Gastrocnemius medialis (tissue), 4 donors: ENCODE measurements at regions of chr2 and their contacts with region 1.

Region 1: GRCh38 chr2:169824373-169825333 is at the start of gene METTL5:
- DNase-seq: peak; percentile 75 to 82
- ATAC-seq: peak; percentile 71
- H3K4me3 ChIP-seq: peak within 1 kb of the TSS; percentile 72 to 90 (median 74)
- H3K27ac ChIP-seq: peak within 1 kb of the TSS; percentile 85 to 97 (median 94)
- H3K4me1 ChIP-seq: peaks cover 42 to 49% of the 10 kb centered on the region in 2 donors
- H3K27me3 ChIP-seq: no peaks in the 10 kb centered on the region
- CTCF ChIP-seq: peak; percentile 85 to 99 (median 97)
- POLR2A ChIP-seq: peak; percentile 76 to 77
- total RNA-seq, gene METTL5: 24.8 to 63.7 (median 40.9) TPM

Region 2: GRCh38 chr2:169513926-169514325 is 310.7 kb before region 1 on chr2:
- in situ Hi-C with region 1: no loop called
- intact Hi-C with region 1: loop called (anchors 10 kb)
- DNase-seq: peak; percentile 78 to 90
- ATAC-seq: peak; percentile 65 to 70
- H3K4me3 ChIP-seq: peak overlapping the region; percentile 71 to 74 (median 72)
- H3K27ac ChIP-seq: peak overlapping the region; percentile 90 to 95 (median 92)
- H3K4me1 ChIP-seq: peaks cover 29 to 31% of the 10 kb centered on the region in 2 donors
- H3K27me3 ChIP-seq: no peaks in the 10 kb centered on the region
- CTCF ChIP-seq: no peak
- POLR2A ChIP-seq: peak in 1 of 2 donors; percentile 63

Region 3: DNA sequence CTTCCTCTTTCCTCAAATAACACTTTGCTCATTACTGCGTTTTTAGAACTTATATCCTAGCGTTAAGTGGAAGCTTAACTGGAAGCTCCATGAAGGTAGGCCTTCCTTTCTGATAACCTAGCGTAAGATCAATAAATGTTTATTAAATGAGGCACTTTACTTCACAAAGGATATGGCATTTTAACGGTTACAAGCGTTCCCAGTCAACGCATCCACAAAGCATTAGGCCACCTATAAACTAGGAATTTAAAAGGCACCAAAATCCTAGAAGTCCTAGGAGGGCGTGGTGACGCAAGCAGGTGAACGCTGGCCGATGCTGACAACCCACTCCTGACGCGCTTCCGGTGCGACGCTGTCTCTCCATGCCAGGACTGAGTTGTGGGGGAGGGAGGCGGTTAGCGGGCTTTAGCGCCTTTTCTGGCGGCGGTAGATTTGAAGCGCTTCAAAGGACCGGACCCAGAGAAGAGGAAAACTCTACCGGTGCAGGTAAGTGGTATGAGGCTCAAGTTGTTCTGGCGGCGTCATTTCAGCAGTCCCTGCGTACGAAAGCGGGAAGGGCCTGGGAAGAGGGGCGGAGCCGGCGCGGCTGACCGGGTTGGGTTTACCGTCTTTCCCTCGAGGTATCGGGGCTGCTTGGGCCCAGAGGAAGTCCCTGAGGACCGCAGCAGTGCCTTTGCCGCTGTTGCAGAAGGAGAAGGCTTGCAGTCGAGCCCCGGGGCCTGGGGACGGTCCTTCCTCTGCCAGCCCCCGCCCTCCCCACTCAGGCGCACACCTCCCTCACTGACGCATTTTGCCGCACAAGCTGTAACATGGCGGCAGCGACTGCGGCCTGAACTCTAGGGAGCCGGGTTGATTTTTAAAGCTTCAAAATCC is 240.4 kb before region 1 on chr2 and contains the start of gene PPIG:
- in situ Hi-C with region 1: no loop called
- intact Hi-C with region 1: loop called (anchors 10 kb)
- DNase-seq: peak; percentile 82 to 85
- ATAC-seq: peak; percentile 96 to 97
- H3K4me3 ChIP-seq: peak within 1 kb of the TSS; percentile 87 to 99 (median 96)
- H3K27ac ChIP-seq: peak within 1 kb of the TSS; percentile 96 to 98 (median 97)
- H3K4me1 ChIP-seq: peaks cover 18 to 26% of the 10 kb centered on the region in 2 donors
- H3K27me3 ChIP-seq: no peaks in the 10 kb centered on the region
- CTCF ChIP-seq: no peak
- POLR2A ChIP-seq: peak; percentile 62 to 68
- total RNA-seq, gene PPIG: 27.7 to 40.5 (median 29.3) TPM

Region 4: GRCh38 chr2:169798718-169799592 is 25.7 kb before region 1 on chr2 and contains the start of gene SSB:
- in situ Hi-C with region 1: no loop called
- intact Hi-C with region 1: loop called (anchors 2 kb)
- DNase-seq: peak; percentile 85 to 86
- ATAC-seq: peak; percentile 94
- H3K4me3 ChIP-seq: peak within 1 kb of the TSS; percentile 72 to 97 (median 80)
- H3K27ac ChIP-seq: peak within 1 kb of the TSS; percentile 71 to 94 (median 82)
- H3K4me1 ChIP-seq: peaks cover 7 to 19% of the 10 kb centered on the region in 2 donors
- H3K27me3 ChIP-seq: no peaks in the 10 kb centered on the region
- CTCF ChIP-seq: no peak
- POLR2A ChIP-seq: peak; percentile 58 to 69
- total RNA-seq, gene SSB: 35.5 to 36.7 (median 36.1) TPM

Region 5: DNA sequence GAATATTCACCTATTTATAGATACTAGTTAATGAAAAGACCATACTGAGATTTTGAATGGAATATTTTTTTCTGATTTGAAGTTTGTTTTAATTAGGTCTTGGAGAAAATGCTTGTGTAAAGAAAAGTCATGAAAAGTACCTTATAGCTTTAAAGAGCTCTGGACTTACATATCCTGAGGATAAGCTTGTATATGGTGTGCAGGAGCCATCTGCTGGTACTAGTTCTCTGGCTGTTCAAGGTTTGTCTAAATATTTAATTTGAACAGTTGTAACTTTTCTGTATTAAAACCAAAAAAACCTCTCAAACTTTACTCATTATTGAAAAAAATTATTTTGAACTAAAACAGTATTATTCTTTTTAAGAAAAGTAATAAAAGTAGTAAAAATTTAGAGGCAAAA is 52.7 kb after region 1 on chr2:
- in situ Hi-C with region 1: no loop called
- intact Hi-C with region 1: loop called (anchors 5 kb)
- DNase-seq: no peak
- ATAC-seq: no peak
- H3K4me3 ChIP-seq: no peak overlapping the region
- H3K27ac ChIP-seq: no peak overlapping the region
- H3K4me1 ChIP-seq: no peaks in the 10 kb centered on the region
- H3K27me3 ChIP-seq: no peaks in the 10 kb centered on the region
- CTCF ChIP-seq: peak in 3 of 5 experiments; percentile 12 to 44 (median 33)
- POLR2A ChIP-seq: no peak

Region 6: GRCh38 chr2:169895294-169895985 is 70.8 kb after region 1 on chr2:
- in situ Hi-C with region 1: no loop called
- intact Hi-C with region 1: loop called (anchors 2 kb)
- DNase-seq: no peak
- ATAC-seq: peak in 1 of 2 donors; percentile 42
- H3K4me3 ChIP-seq: no peak overlapping the region
- H3K27ac ChIP-seq: peak overlapping the region; percentile 57 to 74 (median 67)
- H3K4me1 ChIP-seq: peaks cover 43 to 61% of the 10 kb centered on the region in 2 donors
- H3K27me3 ChIP-seq: no peaks in the 10 kb centered on the region
- CTCF ChIP-seq: no peak
- POLR2A ChIP-seq: no peak

Region 7: GRCh38 chr2:169933124-169933711 is 108.6 kb after region 1 on chr2:
- in situ Hi-C with region 1: loop called (anchors 5 to 10 kb)
- intact Hi-C with region 1: loop called (anchors 1 kb)
- DNase-seq: no peak
- ATAC-seq: no peak
- H3K4me3 ChIP-seq: no peak overlapping the region
- H3K27ac ChIP-seq: no peak overlapping the region
- H3K4me1 ChIP-seq: no peaks in the 10 kb centered on the region
- H3K27me3 ChIP-seq: no peaks in the 10 kb centered on the region
- CTCF ChIP-seq: peak; percentile 18 to 55 (median 43)
- POLR2A ChIP-seq: no peak

Region 8: DNA sequence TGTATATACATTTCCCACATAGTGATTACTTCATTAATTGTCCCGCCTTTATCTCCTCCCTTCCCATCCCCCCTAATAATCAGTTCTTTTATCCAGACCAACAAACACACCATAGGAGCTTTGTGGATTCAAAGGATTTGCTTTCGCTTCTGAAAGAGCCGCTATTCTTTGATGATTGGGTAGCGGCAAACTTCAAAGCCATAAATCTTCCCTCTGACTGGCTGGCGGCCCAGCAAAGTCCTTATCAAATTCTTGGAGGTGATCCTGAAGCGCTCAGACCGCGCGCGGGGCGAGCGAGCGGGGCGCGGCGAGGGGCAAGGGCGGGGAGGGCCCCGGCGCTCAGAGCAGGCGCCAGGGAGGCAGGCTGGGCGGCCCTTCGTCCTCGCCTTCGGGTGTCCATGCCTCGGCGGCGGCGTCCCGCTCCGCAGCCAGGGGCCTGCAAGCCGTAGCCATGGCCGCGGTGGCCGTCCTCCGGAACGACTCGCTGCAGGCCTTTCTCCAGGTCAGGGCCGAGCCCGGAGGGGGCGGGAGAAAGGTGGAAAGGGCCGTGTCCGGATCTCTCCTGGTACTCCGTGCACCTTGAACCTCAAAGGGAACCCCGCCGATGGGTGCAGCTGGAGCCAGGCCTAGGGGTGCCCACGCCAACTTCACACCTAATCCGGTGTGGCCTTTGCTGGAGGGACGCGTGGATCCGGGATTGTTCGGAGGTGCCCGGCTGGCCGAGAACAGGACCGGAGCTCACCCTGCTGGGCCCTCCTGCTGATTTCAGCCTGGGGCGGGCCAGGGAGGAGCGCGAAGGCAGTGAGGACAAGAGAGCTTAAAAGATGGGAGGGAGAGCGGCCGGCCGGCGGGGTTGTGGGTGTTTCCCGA is 890.6 kb after region 1 on chr2 and contains the start of gene SP5:
- in situ Hi-C with region 1: no loop called
- intact Hi-C with region 1: no loop called
- DNase-seq: no peak
- ATAC-seq: peak in 1 of 2 donors; percentile 14
- H3K4me3 ChIP-seq: peak within 1 kb of the TSS; percentile 44 to 63 (median 58)
- H3K27ac ChIP-seq: no peak within 1 kb of the TSS
- H3K4me1 ChIP-seq: peaks cover 4 to 16% of the 10 kb centered on the region in 2 donors
- H3K27me3 ChIP-seq: peaks cover 82 to 94% (median 86%) of the 10 kb centered on the region in 3 donors
- CTCF ChIP-seq: no peak
- POLR2A ChIP-seq: no peak
- total RNA-seq, gene SP5: 0.29 to 0.44 (median 0.39) TPM in 3 of 4 donors, not detected in the other